Heart left ventricle (tissue), 16 donors: ENCODE measurements at regions of chr17 and their contacts with region 1.

Region 1: DNA sequence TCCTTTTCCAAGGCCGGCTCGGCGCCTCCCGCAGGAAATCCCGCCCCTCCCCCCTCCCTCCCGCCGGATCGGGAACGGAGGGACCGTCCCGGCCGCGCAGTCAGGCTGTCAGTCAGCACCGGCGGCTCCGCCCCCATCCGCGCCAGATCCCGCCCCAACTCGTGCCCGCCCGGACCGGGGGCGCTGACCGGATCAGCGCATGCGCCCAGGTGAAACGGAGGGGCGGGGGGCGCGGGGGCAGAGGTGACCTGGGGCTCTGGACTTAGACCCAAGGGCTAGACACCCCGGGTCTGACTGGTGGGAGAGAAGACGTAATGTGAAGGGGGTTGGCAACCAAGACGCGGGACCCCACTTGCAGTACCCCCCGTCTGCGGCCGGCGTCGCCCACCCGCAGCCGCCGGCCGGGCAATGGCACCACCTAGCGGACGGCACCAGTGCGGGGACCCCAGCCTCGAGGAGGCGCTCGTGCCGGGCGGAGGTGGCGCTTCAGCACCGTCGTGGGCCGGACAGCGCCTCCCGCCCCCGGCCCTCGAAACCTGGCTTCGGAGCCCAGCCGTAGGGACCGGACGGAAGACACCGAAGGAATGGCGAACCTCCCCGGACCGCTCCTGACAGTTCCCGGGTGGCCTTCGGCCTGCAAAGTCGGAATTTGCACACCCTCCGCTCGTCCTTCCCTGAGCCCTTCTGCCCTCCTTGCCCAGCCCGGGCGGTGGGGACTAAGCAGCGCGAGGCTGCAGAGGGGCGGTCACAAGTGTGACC is at the start of gene CASKIN2:
- DNase-seq: peak; percentile 97 to 98 (median 98)
- ATAC-seq: peak; percentile 79 to 91 (median 90)
- H3K4me3 ChIP-seq: peak within 1 kb of the TSS; percentile 77 to 99 (median 93)
- H3K27ac ChIP-seq: peak within 1 kb of the TSS; percentile 86 to 98 (median 94)
- H3K4me1 ChIP-seq: peaks cover 3 to 58% (median 39%) of the 10 kb centered on the region in 12 donors
- H3K27me3 ChIP-seq: no peaks in the 10 kb centered on the region
- CTCF ChIP-seq: peak; percentile 92 to 99 (median 96)
- POLR2A ChIP-seq: no peak
- total RNA-seq, gene CASKIN2: 27.1 to 51.2 (median 39.3) TPM

Region 2: GRCh38 chr17:75319904-75320691 is 195.6 kb before region 1 on chr17:
- intact Hi-C with region 1: loop called in 3 of 10 experiments (anchors 10 kb)
- DNase-seq: no peak
- ATAC-seq: no peak
- H3K4me3 ChIP-seq: no peak overlapping the region
- H3K27ac ChIP-seq: peak overlapping the region in 1 of 12 donors; percentile 95
- H3K4me1 ChIP-seq: peaks cover 0 to 59% (median 2%) of the 10 kb centered on the region in 12 donors
- H3K27me3 ChIP-seq: no peaks in the 10 kb centered on the region
- CTCF ChIP-seq: no peak
- POLR2A ChIP-seq: no peak

Region 3: GRCh38 chr17:75440738-75441448 is 74.8 kb before region 1 on chr17:
- intact Hi-C with region 1: loop called in 3 of 10 experiments (anchors 5 kb)
- DNase-seq: no peak
- ATAC-seq: peak; percentile 42 to 73 (median 58)
- H3K4me3 ChIP-seq: no peak overlapping the region
- H3K27ac ChIP-seq: peak overlapping the region in 11 of 12 donors; percentile 37 to 77 (median 60)
- H3K4me1 ChIP-seq: peaks cover 5 to 44% (median 23%) of the 10 kb centered on the region in 12 donors
- H3K27me3 ChIP-seq: no peaks in the 10 kb centered on the region
- CTCF ChIP-seq: no peak
- POLR2A ChIP-seq: no peak

Region 4: DNA sequence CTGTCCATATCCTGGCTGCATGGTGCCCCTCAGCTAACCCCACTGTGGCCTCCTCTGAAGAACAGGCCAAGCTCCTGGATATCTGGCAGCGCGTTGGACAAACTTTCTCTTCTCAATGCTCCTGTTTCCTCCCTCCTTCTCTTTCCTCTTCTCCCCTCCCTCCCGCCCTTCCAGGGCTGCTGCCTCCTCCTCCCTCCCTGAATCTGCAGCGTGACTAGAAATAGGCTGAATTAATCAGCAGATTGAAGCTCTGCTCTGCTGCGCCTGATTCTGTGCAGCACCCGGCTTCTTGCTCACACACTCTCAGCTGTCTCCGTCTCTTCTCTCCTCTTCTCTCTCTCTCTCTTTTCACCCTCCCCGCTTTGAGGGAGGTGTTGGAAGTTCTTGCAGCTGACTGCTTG is 39.4 kb before region 1 on chr17:
- intact Hi-C with region 1: loop called in 2 of 10 experiments (anchors 2 kb)
- DNase-seq: peak in 2 of 5 donors; percentile 70 to 73
- ATAC-seq: peak; percentile 76 to 80 (median 78)
- H3K4me3 ChIP-seq: peak overlapping the region in 8 of 12 donors; percentile 16 to 48 (median 32)
- H3K27ac ChIP-seq: peak overlapping the region; percentile 59 to 94 (median 82)
- H3K4me1 ChIP-seq: peaks cover 17 to 70% (median 43%) of the 10 kb centered on the region in 12 donors
- H3K27me3 ChIP-seq: no peaks in the 10 kb centered on the region
- CTCF ChIP-seq: no peak
- POLR2A ChIP-seq: no peak